Heart right ventricle (tissue), 16 donors: ENCODE measurements at regions of chr19 and their contacts with region 1.

Region 1: GRCh38 chr19:56333505-56333904 is 18.9 kb upstream of the ZSCAN5A start:
- DNase-seq: peak in 1 of 2 donors; percentile 26
- ATAC-seq: peak in 2 of 8 donors; percentile 50 to 52
- H3K4me3 ChIP-seq: no peak overlapping the region
- H3K27ac ChIP-seq: no peak overlapping the region
- H3K4me1 ChIP-seq: no peaks in the 10 kb centered on the region
- H3K27me3 ChIP-seq: no peaks in the 10 kb centered on the region
- CTCF ChIP-seq: peak in 8 of 9 donors; percentile 42 to 75 (median 70)

Region 2: GRCh38 chr19:56170261-56170660 is 163.2 kb before region 1 on chr19:
- intact Hi-C with region 1: loop called in 1 of 10 experiments (anchors 5 kb)
- DNase-seq: peak in 1 of 2 donors; percentile 26
- ATAC-seq: peak in 7 of 8 donors; percentile 34 to 85 (median 75)
- H3K4me3 ChIP-seq: no peak overlapping the region
- H3K27ac ChIP-seq: peak overlapping the region in 3 of 10 donors; percentile 15 to 60 (median 15)
- H3K4me1 ChIP-seq: peaks cover 0 to 9% (median 4%) of the 10 kb centered on the region in 9 donors
- H3K27me3 ChIP-seq: peaks cover 0 to 18% (median 6%) of the 10 kb centered on the region in 7 donors
- CTCF ChIP-seq: no peak

Region 3: GRCh38 chr19:56252699-56253422 is 80.6 kb before region 1 on chr19:
- intact Hi-C with region 1: loop called in 8 of 10 experiments (anchors 1 to 10 kb)
- DNase-seq: peak; percentile 57 to 85
- ATAC-seq: peak; percentile 43 to 86 (median 76)
- H3K4me3 ChIP-seq: no peak overlapping the region
- H3K27ac ChIP-seq: no peak overlapping the region
- H3K4me1 ChIP-seq: peaks cover 0 to 4% (median 0%) of the 10 kb centered on the region in 9 donors
- H3K27me3 ChIP-seq: no peaks in the 10 kb centered on the region
- CTCF ChIP-seq: peak; percentile 58 to 87 (median 79)

Region 4: DNA sequence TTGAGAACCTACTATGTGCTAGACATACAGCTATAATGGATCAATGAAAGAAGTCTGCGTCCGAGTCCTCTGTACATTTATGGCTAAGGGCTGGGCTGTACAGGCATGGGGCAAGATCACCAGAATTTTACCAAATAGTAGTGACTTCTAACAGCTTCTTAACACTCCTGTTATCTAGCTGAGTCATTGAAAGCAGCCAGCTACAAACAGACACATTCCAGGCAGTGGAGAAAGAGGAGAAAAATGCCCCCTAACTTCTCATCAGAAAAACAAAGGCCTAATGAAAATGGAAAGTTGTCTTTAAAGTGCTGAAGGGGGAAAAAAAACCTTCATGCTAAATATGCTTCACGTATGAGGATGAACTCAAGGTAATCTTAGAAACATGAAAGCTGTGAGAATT is 157.9 kb after region 1 on chr19:
- intact Hi-C with region 1: no loop called
- DNase-seq: no peak
- ATAC-seq: no peak
- H3K4me3 ChIP-seq: no peak overlapping the region
- H3K27ac ChIP-seq: no peak overlapping the region
- H3K4me1 ChIP-seq: peaks cover 0 to 4% (median 0%) of the 10 kb centered on the region in 9 donors
- H3K27me3 ChIP-seq: no peaks in the 10 kb centered on the region
- CTCF ChIP-seq: no peak